Activated CD8-positive, alpha-beta memory T cell treated with anti-CD3 and anti-CD28 coated beads, Interleukin-2, amount 10 ng/mL, durations not matched to agents 7 days and 5 days (primary cell): ENCODE measurements at regions of chr22 and their contacts with region 1.

Region 1: DNA sequence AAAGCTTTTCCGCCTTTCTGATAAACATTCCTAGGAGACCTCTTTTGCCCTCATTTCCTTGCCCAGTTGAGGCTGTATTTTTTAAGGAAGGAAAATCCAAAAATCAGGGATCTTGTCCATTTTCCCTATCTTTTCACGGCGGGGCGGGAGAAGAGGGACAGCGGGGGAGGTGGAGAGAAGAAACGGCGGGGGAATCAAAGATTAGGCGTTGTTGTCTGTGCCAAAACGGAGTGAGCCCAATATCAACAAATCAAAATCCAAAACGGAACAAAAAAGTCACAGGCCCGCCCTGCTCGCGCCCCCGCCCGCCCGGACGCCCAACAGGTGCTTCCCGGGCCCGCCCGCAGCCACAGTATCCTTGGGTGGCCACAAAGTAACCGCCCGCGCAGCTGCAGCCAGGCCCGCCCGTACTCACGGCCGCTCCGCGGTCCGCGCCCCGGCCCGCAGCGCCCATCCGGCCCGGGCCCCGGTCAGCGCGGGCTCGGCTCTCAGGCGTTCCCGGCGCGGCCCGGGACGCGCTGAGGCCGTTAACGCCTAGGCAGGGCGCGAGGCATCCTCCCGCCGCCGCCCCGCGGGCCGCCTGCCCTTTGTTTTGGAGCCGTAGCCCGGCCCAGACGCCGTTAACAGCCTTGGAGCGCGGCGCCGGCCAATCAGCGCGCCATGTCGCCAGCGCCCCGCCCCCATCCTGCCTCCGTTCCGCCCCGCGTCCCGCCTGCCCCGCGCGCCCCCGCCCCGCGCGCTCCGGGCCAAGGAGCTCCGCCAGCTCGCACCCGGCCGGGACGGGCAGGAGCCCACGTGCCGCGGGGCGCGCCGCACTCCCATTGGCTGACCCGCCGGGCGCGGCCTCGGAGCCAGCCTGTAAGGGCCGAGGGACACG is at the start of gene YPEL1:
- DNase-seq: peak; percentile 96
- ATAC-seq: peak; percentile 95
- H3K4me3 Mint-ChIP-seq: peak within 1 kb of the TSS; percentile 83
- H3K27ac Mint-ChIP-seq: peak within 1 kb of the TSS; percentile 82
- H3K4me1 Mint-ChIP-seq: peaks cover 22% of the 10 kb centered on the region
- H3K27me3 Mint-ChIP-seq: peaks cover 17% of the 10 kb centered on the region
- total RNA-seq, gene YPEL1: 7.2 to 21.6 TPM

Region 2: GRCh38 chr22:21579518-21580147 is 155.8 kb before region 1 on chr22:
- CTCF ChIA-PET with region 1: no interaction called
- DNase-seq: no peak
- ATAC-seq: no peak
- H3K4me3 Mint-ChIP-seq: no peak overlapping the region
- H3K27ac Mint-ChIP-seq: no peak overlapping the region
- H3K4me1 Mint-ChIP-seq: peaks cover 24% of the 10 kb centered on the region
- H3K27me3 Mint-ChIP-seq: no peaks in the 10 kb centered on the region

Region 3: GRCh38 chr22:21762712-21763581 is 27.5 kb after region 1 on chr22:
- CTCF ChIA-PET with region 1: interaction called, 14 read pairs
- DNase-seq: peak; percentile 77
- ATAC-seq: peak; percentile 35
- H3K4me3 Mint-ChIP-seq: peak overlapping the region; percentile 51
- H3K27ac Mint-ChIP-seq: peak overlapping the region; percentile 89
- H3K4me1 Mint-ChIP-seq: peaks cover 83% of the 10 kb centered on the region
- H3K27me3 Mint-ChIP-seq: no peaks in the 10 kb centered on the region